ENCODE measurements at regions of chr11 and their contacts with region 1.

Region 1: DNA sequence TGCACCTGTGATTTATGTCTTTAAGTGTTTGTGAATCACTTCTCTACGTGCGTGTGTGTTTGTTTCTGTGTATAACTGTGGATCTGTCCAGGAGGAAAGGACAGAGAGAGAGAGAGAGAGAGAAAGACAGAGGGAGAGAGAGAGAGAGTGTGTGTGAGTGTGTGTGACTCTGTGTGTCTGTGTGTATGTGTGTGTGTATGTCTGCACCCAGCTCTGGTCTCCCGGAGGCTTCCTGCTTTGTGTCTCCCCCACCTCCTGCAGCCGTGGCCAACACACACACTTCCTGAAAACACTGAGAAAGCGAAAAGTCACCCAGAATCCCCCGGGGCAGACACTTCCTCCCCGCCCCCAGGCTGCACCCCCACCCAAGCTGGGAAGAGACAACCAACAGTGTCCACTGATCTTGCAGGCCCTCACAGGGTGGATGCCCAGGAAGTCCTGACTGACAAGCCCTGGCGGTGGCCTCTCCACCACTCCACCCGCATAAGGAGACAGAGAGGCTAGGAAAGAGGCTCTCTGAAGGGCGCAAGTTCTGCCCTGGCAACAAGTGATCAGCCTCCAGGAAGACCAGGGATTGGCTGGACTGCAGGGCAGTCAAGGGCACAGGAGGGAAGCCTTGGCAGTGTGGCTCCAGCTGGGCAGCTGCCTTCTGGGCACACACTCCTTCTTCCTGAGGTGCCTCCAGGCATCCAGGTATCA is 30.0 kb downstream of the ARAP1 start:
- DNase-seq: peak; percentile 90
- H3K4me3 Mint-ChIP-seq: peak overlapping the region; percentile 86
- H3K27ac Mint-ChIP-seq: peak overlapping the region; percentile 95
- H3K4me1 Mint-ChIP-seq: peaks cover 57% of the 10 kb centered on the region
- H3K27me3 Mint-ChIP-seq: no peaks in the 10 kb centered on the region

Region 2: GRCh38 chr11:72686639-72687220 is 35.5 kb before region 1 on chr11:
- CTCF ChIA-PET with region 1: no interaction called
- POLR2A ChIA-PET with region 1: no interaction called
- DNase-seq: no peak
- H3K4me3 Mint-ChIP-seq: no peak overlapping the region
- H3K27ac Mint-ChIP-seq: peak overlapping the region; percentile 78
- H3K4me1 Mint-ChIP-seq: peaks cover 47% of the 10 kb centered on the region
- H3K27me3 Mint-ChIP-seq: no peaks in the 10 kb centered on the region

Region 3: DNA sequence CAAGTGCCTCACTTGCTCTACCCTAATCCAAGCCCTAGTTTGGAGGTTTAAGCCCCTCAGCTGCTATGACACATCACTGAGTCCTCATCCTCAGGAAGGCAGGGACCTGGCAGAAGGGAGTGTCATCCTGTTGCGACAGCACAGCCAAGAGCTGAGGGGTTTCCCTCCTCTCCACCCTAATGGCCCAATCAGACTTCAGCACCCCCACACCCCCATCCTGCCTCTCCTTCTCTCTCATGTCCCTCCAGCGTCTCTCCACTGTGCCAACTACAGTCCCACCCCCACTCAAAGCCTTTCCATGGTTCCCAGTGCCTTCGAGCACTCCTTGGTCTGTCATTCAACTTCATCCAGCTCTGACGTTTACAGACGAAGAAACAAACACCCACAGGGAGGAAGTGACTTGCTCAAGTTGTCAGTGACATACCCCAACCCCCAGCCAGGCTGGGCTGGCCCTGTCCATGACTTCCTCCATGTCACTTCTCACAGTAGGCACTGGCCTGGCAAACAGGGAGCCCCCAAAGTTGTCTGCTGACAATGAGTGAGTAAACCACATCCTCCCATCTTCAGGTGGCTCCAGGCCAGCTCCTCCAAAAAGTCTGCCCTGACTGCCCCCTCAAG is 14.4 kb after region 1 on chr11:
- CTCF ChIA-PET with region 1: interaction called, 36 read pairs
- POLR2A ChIA-PET with region 1: no interaction called
- DNase-seq: peak; percentile 69
- H3K4me3 Mint-ChIP-seq: peak overlapping the region; percentile 51
- H3K27ac Mint-ChIP-seq: peak overlapping the region; percentile 99
- H3K4me1 Mint-ChIP-seq: peaks cover 57% of the 10 kb centered on the region
- H3K27me3 Mint-ChIP-seq: no peaks in the 10 kb centered on the region

Region 4: DNA sequence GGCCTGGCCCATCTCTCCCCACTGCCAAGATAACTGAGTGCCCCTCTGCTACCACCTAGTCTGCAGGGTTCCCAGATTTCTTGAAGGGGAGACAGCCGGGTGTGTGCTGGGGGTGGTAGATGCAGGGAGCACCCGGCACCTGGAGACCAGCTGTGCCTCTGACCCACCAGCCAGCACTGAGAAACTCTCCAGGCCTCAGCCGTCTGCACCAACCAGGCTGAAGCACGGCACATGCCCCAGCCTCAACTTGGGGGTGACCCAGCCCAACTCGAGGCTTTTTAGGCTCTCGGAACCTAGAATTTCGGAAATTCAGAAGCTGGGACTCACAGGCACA is 24.0 kb after region 1 on chr11:
- CTCF ChIA-PET with region 1: interaction called, 16 read pairs
- POLR2A ChIA-PET with region 1: no interaction called
- DNase-seq: no peak
- H3K4me3 Mint-ChIP-seq: no peak overlapping the region
- H3K27ac Mint-ChIP-seq: no peak overlapping the region
- H3K4me1 Mint-ChIP-seq: peaks cover 43% of the 10 kb centered on the region
- H3K27me3 Mint-ChIP-seq: no peaks in the 10 kb centered on the region

Region 5: DNA sequence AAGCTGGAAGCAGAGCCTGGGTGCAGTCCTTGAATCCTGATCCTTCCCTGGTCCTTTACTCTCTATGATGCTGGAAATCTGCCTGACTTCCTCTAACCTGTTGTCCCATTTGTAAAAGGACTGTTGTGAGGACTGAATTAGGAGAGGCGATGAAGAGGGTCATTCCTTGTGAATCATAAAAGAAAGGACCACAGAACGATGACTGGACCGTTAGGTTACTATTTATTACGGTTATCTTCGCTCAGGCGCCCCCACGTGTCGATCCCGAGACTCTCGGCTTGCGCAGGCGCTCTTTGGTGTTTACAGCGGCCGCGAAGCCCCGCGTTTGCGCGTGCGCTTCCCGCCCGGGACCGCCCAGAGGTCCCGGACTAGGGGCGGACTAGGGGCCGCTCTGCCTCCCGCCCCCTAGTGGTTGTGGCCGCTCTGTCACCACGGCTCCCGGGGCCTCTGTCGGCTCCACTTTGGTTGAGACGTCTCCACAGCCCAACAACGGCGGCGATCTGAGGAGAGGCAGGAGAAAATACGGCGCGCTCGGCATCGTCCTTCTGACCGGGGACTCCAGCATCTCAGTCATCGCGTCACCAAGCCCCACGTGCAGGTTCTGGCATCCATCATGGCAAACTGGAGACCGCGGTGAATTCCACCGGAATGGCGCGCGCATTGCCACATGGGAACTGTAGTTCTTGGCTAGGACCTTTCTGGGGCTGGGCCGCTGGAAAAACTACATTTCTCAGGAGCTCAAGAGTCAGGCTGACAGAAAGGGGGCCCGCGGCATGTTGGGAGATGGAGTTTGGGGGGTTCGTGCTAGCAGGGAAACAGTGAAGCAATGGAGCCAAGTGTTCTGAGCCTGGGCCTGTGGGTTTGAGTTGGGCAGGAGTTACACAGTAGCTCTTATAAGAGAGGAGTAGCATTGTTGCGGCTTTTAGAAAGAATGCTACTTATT is 71.5 kb after region 1 on chr11 and contains the start of gene STARD10:
- CTCF ChIA-PET with region 1: interaction called, 11 read pairs
- POLR2A ChIA-PET with region 1: no interaction called
- DNase-seq: peak; percentile 93
- H3K4me3 Mint-ChIP-seq: peak within 1 kb of the TSS; percentile 92
- H3K27ac Mint-ChIP-seq: peak within 1 kb of the TSS; percentile 98
- H3K4me1 Mint-ChIP-seq: peaks cover 25% of the 10 kb centered on the region
- H3K27me3 Mint-ChIP-seq: no peaks in the 10 kb centered on the region
- total RNA-seq, gene STARD10: 4.5 to 6.4 TPM

Region 6: DNA sequence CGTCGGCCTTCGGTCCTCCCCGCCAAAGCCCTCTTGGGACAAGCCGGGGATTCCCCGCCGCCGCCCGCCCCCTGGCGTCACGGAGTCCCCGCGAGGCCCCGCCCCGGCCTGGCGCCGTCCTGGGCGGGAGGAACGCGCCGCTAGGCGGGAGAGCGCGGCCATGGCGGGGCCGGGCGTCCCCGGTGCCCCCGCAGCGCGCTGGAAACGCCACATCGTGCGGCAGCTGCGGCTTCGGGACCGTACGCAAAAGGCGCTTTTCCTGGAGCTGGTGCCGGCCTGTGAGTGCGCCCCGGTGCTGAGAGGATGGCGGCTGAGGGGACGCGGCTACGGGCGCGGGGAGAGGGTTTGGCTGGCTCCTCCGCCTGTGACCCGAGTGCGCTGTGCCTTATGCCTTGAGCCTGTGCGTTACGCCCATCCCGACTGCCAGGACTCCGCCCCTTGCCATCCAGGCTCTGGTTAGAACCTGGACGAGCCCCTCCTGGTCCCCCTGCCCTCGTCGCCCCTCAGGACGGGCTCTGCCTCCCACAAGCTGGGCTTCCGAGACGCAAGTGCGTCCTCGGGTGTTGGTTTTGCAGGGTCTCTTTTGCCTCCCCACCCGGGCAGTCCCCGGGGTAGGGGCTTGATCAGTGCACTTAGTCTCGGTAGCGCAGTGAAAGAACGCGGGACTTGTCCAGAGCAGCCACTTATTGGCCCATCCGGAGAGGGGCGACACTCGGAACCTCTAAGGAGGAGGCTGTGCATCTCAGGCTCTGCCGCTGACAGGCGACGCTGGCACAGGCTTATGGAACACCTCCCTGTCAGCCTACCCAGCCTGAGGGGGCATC is 92.3 kb after region 1 on chr11 and contains the start of gene ATG16L2:
- CTCF ChIA-PET with region 1: interaction called, 11 read pairs
- POLR2A ChIA-PET with region 1: interaction called, 5 read pairs
- DNase-seq: peak; percentile 88
- H3K4me3 Mint-ChIP-seq: peak within 1 kb of the TSS; percentile 100
- H3K27ac Mint-ChIP-seq: peak within 1 kb of the TSS; percentile 99
- H3K4me1 Mint-ChIP-seq: peaks cover 52% of the 10 kb centered on the region
- H3K27me3 Mint-ChIP-seq: no peaks in the 10 kb centered on the region
- total RNA-seq, gene ATG16L2: 108 to 113 TPM

Region 7: DNA sequence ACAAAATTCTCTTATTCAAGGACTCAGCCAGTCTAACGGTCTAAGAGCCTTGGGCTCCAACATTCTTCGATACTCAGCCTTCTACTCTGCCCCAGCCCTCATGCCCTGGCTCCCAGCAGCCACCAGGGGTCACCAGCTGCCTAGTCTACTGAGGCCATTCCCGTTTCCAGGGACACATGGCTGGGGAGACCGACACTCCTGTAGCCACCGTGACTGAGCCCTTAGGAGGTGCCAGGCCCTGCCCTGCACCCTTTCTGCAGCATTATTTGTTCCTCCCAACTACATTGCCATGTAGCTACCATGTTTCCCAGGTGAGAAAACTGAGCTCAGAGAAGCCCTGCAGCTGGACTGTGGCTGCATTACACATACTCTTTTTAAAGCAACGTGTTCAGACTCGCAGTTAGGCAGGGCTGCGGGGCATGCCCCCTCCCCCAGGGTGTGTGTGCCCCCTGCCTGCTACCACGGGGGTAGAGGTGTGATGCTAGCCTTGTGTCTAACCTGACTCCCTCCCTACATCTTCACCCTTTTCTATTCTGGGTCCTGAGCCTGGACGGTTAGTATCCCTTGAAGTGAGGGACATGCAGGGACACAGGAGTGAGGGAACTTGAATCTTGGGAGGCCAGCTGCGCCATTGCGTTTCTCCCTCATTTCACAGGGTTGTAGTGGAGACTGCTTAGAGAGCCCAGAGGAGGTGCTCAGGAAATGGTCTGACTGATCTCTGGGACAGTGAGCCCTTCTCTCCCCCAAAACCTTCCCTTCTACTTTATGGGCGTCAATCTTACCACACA is 109.5 kb after region 1 on chr11:
- CTCF ChIA-PET with region 1: interaction called, 12 read pairs
- POLR2A ChIA-PET with region 1: interaction called, 3 read pairs
- DNase-seq: peak; percentile 59
- H3K4me3 Mint-ChIP-seq: no peak overlapping the region
- H3K27ac Mint-ChIP-seq: no peak overlapping the region
- H3K4me1 Mint-ChIP-seq: peaks cover 38% of the 10 kb centered on the region
- H3K27me3 Mint-ChIP-seq: no peaks in the 10 kb centered on the region